Heart left ventricle (tissue), 16 donors: ENCODE measurements at regions of chr3 and their contacts with region 1.

Region 1: DNA sequence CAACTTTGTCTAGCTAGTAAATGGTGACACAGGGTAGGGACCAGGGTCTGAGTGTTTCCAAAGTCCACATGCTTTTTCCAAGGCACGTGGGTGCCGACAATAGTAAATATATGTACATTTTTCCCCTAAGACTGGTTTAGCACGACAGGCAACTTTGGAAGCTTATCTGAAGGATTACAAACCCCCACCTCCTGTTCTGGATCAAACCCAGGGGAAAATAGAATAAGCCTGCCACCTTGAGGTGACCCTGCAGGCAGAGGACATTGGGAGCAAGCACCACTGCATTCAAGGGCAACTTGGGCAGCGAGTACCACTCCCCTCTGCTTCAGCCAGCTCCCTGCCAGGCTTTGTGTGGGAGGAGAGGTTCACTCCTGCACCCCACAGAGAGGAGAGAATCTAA is 44.8 kb downstream of the KBTBD12 start:
- DNase-seq: peak in 4 of 5 donors; percentile 36 to 60 (median 48)
- ATAC-seq: peak; percentile 11 to 68 (median 60)
- H3K4me3 ChIP-seq: no peak overlapping the region
- H3K27ac ChIP-seq: peak overlapping the region; percentile 18 to 90 (median 59)
- H3K4me1 ChIP-seq: peaks cover 0 to 36% (median 13%) of the 10 kb centered on the region in 12 donors
- H3K27me3 ChIP-seq: no peaks in the 10 kb centered on the region
- CTCF ChIP-seq: peak in 10 of 12 donors; percentile 23 to 64 (median 42)
- POLR2A ChIP-seq: no peak

Region 2: DNA sequence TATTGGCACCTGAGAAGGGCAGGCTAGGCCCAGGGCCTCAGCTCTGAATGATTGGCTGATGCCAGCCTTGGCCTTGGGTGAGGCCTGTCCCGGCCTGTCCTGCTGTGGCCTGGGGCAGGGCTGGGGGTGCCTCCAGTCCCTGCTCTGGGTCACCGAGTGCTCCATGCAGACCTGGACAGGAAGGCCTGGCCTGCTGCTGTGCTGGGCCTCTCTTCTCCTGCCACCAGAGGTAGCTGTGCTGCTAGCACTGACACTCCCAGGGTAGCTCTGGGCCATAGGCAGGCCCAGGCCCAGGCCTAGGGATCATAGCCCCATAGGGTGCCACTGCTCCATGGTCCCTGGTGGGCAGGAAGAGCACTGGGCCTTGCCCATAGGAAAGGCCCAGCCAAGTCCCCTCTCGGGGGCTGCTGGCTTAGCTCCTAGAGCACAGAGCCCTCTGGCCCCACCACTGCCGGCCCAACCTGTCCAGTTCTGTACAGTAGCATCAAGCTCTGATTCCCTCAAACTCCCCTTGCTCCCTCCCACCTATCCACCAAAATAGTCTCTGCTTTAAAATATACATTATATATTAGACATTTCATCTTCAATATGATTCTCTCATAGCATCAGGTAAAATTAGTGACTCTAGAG is 268.9 kb before region 1 on chr3:
- intact Hi-C with region 1: loop called in 1 of 10 experiments (anchors 5 kb)
- DNase-seq: peak in 2 of 5 donors; percentile 56 to 73
- ATAC-seq: peak; percentile 55 to 72 (median 64)
- H3K4me3 ChIP-seq: no peak overlapping the region
- H3K27ac ChIP-seq: peak overlapping the region in 11 of 12 donors; percentile 8 to 70 (median 52)
- H3K4me1 ChIP-seq: peaks cover 0 to 60% (median 21%) of the 10 kb centered on the region in 12 donors
- H3K27me3 ChIP-seq: no peaks in the 10 kb centered on the region
- CTCF ChIP-seq: peak; percentile 29 to 68 (median 46)
- POLR2A ChIP-seq: no peak

Region 3: DNA sequence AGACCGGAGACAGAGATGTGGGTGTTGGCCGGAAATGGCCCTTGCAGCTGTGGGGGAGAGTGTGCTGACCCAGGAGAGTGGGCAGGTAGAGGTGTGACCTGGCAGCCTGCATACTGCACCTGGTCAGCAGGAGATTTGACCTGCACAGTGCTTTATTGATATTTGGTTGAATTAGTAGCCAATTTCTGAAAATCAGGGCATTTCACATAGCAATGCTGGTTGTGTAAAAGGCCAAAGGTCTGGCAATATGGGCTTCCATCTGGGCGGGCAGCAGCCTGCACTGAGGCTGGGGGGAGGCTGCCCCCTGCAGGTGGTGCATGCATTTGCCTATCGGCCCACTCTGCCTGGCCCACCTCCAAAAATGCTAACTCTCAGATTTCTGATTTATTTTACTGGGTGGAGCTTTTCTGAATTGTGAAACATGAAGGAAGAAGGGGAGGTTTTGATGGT is 128.1 kb before region 1 on chr3:
- intact Hi-C with region 1: loop called in 1 of 10 experiments (anchors 10 kb)
- DNase-seq: peak in 4 of 5 donors; percentile 52 to 79 (median 58)
- ATAC-seq: peak in 3 of 4 donors; percentile 59 to 78 (median 63)
- H3K4me3 ChIP-seq: no peak overlapping the region
- H3K27ac ChIP-seq: no peak overlapping the region
- H3K4me1 ChIP-seq: no peaks in the 10 kb centered on the region
- H3K27me3 ChIP-seq: no peaks in the 10 kb centered on the region
- CTCF ChIP-seq: peak; percentile 64 to 81 (median 72)
- POLR2A ChIP-seq: no peak

Region 4: DNA sequence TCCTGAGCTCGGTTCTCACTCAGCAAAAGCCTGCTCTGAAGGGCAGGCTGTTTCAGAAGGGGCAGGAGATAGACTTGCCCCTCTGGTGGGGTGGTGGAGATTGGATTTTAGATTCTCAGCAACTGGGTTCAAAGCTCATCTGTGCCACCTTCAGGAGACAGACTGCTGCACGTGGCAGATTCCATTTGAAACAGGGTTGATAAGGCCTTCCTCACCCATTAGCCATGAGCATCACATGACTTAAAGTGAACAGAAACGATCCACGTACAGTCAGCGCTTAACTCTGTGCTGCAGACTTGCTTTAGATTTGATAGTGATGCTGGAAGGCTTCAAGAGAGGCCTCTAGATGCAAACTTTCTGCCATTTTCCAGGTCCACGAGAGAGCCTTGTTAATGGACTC is 102.5 kb before region 1 on chr3:
- intact Hi-C with region 1: loop called in 1 of 10 experiments (anchors 10 kb)
- DNase-seq: no peak
- ATAC-seq: no peak
- H3K4me3 ChIP-seq: no peak overlapping the region
- H3K27ac ChIP-seq: no peak overlapping the region
- H3K4me1 ChIP-seq: no peaks in the 10 kb centered on the region
- H3K27me3 ChIP-seq: no peaks in the 10 kb centered on the region
- CTCF ChIP-seq: peak in 3 of 12 donors; percentile 10 to 16 (median 15)
- POLR2A ChIP-seq: no peak